HepG2 (cell line): ENCODE measurements at regions of chr17 and their contacts with region 1.

Region 1: DNA sequence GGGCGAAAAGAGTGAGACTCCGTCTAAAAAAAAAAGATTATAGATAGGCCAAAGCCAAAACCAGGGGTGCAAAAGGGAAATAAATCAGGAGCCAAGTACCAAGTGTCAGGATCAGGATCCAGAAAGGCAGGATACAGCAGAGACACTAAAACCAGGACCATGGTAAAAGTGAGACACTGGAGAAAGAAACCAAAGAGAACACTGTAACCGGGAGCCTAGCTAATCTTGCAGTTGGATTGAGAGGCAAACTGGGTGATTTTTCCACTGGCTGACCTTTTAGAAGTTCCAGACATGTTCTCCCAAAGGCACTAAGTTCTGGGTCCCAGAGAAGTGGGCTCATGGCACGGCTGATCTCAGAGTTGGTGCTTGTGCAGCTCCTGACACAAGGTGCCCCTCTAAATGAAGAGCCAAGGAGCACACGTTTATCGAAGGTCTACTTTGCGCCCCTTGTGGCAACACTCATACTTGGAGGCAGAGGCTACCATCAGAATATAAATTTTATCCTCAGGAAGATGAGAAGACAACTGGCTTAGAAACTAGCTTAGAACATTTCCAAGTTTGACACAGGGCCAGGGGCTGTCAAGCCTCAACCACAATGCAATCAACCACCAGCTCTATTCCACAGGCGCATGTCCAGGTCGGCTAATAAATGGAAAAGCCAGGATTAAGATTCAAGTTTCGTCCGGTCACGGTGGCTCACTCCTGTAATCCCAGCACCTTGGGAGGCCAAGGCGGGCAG is 27.5 kb upstream of the HELZ start:
- DNase-seq: peak; percentile 47
- ATAC-seq: peak; percentile 91
- H3K4me3 ChIP-seq: peak overlapping the region in 2 of 3 experiments; percentile 38 to 46; a peak in 4 of 6 replicates
- H3K27ac ChIP-seq: no peak overlapping the region
- H3K4me1 ChIP-seq: peaks cover 14% of the 10 kb centered on the region
- H3K27me3 ChIP-seq: no peaks in the 10 kb centered on the region
- CTCF ChIP-seq: peak; percentile 67
- EP300 ChIP-seq: no peak
- POLR2A ChIP-seq: no peak
- RAD21 ChIP-seq: peak; percentile 39; the same call in 1 of the 2 replicates

Region 2: GRCh38 chr17:67260170-67261011 is 12.1 kb before region 1 on chr17:
- CTCF ChIA-PET with region 1: no interaction called
- POLR2A ChIA-PET with region 1: no interaction called
- in situ Hi-C with region 1: no loop called
- intact Hi-C with region 1: no loop called
- DNase-seq: peak; percentile 77
- ATAC-seq: peak; percentile 57
- H3K4me3 ChIP-seq: no peak overlapping the region
- H3K27ac ChIP-seq: peak overlapping the region; percentile 46
- H3K4me1 ChIP-seq: peaks cover 56% of the 10 kb centered on the region
- H3K27me3 ChIP-seq: no peaks in the 10 kb centered on the region
- CTCF ChIP-seq: no peak
- EP300 ChIP-seq: no peak
- POLR2A ChIP-seq: no peak
- RAD21 ChIP-seq: no peak

Region 3: GRCh38 chr17:67335329-67335835 is 62.9 kb after region 1 on chr17:
- CTCF ChIA-PET with region 1: no interaction called
- POLR2A ChIA-PET with region 1: no interaction called
- in situ Hi-C with region 1: no loop called
- intact Hi-C with region 1: loop called (anchors 10 kb)
- DNase-seq: no peak
- ATAC-seq: no peak
- H3K4me3 ChIP-seq: no peak overlapping the region
- H3K27ac ChIP-seq: no peak overlapping the region
- H3K4me1 ChIP-seq: peaks cover 59% of the 10 kb centered on the region
- H3K27me3 ChIP-seq: no peaks in the 10 kb centered on the region
- CTCF ChIP-seq: no peak
- EP300 ChIP-seq: no peak
- POLR2A ChIP-seq: no peak
- RAD21 ChIP-seq: no peak

Region 4: DNA sequence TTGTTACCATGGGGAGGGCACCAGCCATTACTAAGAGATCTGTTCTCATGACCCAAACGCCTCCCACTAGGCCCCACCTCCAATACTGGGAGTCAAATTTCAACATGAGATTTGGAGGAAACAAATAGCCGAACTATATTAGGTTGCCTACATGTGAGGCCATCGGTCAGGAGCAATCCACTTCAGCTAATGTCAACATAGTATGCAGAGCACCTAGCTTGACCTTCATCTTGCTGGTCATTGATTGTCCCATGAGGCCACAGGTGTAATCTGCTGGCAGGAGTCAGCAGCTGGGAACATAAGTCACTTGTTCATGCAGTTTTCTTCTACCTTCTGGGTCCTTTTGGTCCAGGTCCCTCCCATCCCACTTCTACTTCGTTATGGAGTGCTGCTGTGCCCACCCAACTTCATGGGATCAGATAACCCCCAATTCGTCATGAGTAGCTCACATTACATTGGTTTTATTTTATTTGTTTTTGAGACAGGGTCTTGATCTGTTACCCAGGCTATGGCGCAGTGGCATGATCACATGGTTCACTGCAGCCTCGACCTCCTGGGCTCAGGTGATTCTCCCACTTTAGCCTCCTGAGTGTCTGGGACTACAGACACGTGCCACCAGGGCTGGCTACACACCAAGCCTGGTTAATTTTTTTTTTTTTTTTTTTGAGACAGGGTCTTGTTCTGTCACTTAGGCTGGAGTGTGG is 757.2 kb after region 1 on chr17:
- CTCF ChIA-PET with region 1: no interaction called
- POLR2A ChIA-PET with region 1: no interaction called
- in situ Hi-C with region 1: no loop called
- intact Hi-C with region 1: no loop called
- DNase-seq: peak; percentile 97
- ATAC-seq: peak; percentile 92
- H3K4me3 ChIP-seq: peak overlapping the region in 1 of 3 experiments; percentile 20; a peak in 1 of 6 replicates
- H3K27ac ChIP-seq: peak overlapping the region; percentile 52
- H3K4me1 ChIP-seq: peaks cover 62% of the 10 kb centered on the region
- H3K27me3 ChIP-seq: no peaks in the 10 kb centered on the region
- CTCF ChIP-seq: peak; percentile 26; the same call in 1 of the 2 replicates
- EP300 ChIP-seq: peak in 1 of 2 experiments; percentile 64; a peak in 2 of 4 replicates
- POLR2A ChIP-seq: peak; percentile 44 to 61; a peak in 3 of 4 replicates
- RAD21 ChIP-seq: no peak